ENCODE measurements at regions of chr7 and their contacts with region 1.

Region 1: DNA sequence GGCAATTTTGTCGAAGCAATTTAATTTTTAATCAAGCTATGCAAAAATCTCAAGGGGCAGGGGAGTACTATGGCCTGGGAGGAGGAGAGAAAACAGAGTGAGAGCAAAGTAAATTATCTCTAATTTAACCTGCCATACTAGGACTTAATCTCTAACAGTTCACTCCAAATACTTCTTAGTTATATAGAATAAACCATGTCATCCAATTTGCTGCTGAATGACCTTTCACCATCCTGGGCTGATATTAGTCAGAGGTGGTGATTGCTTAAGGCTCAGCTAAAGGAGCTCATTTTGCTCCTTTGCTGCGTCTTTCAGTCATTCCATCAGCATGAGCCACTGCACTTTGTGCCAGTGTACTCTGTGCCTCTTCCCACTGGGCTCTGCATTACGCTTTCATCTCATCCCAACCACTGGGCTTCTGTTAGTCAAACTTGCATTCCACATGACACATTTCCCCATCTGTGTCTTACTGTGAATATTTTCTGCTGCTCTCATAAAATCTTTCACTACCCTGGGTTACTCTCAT is 84.2 kb downstream of the CD36 start:
- DNase-seq: peak; percentile 98
- H3K4me3 ChIP-seq: no peak overlapping the region
- CTCF ChIP-seq: no peak

Region 2: GRCh38 chr7:80634505-80634904 is 88.2 kb before region 1 on chr7:
- in situ Hi-C with region 1: no loop called
- DNase-seq: no peak
- H3K4me3 ChIP-seq: no peak overlapping the region
- CTCF ChIP-seq: no peak

Region 3: DNA sequence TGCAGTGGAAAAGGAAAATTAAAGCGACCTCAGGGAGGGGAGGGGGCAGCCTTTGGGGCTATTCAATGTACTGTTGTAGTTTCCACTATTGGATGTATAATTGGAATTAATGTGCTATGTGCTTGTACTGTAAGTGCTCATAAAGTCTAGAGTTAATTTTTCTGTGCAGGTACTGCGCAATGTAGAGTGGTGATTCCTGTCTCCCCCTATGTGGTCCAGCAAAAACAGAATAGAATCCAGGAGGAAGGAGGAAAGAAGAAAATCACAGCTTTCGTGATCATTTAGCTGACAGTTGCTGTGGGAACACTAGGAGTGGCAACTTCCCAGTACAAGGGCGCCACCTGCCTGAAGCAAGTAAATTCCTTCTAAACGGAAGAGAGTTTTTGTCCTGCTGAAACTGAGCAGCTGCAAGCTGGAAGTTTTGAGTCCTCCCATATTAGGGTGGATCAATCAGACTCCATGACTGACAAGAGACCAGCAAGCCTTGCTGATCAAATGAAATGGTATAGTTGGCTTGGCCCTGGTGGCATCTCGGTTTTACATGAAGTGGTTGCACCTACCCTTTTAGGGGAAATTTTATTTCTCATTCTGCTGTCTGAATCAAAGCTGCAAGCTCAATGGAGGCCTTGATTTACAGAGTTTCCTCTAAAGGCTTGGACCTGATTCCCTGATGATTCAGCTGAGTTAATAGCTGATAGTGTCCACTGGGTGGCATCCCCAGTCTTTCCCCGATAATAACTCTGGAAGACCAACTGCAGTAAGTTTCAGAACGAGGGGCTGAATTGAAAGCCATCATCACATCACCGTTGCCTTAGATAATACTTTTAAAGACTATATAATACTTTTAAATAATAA is 747.4 kb after region 1 on chr7:
- in situ Hi-C with region 1: loop called (anchors 25 kb)
- DNase-seq: peak; percentile 76
- H3K4me3 ChIP-seq: no peak overlapping the region
- CTCF ChIP-seq: peak; percentile 74